ENCODE measurements at regions of chr19 and their contacts with region 1.

Region 1: GRCh38 chr19:15280915-15281683 is 48.9 kb upstream of the EPHX3 start:
- DNase-seq: peak; percentile 91

Region 2: DNA sequence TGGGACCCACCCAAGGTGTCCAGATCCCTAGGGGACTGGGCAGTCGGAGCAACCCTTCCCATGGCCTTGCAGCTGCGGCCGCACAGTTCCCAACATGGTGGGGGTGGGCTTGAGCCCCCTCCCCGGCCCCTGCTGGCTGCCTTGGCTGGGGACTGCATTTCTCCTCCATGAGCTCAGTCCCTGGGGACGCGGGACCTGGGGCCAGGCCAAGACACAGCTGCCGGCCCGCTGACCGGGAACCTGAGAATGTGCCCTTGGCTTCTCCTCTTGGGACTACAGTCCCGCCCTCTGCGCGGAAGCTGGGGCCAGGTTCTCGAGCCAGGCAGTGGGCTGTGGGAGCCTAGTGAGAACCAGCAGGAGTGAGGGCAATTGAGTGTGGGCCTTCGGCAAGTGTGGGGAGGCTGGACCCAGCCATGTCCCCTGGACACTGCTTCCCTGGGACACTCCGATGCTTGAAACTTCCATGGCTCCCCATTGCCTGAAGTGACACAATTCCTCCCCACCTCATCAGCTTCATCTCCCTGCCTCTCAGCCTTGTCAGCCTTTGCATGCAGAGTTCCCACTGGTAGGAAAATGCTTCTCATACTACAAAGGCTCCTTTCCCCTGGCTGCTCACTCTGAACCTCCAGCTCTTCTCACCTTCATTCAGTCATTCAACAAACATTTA is 67.3 kb before region 1 on chr19:
- in situ Hi-C with region 1: no loop called
- DNase-seq: no peak

Region 3: DNA sequence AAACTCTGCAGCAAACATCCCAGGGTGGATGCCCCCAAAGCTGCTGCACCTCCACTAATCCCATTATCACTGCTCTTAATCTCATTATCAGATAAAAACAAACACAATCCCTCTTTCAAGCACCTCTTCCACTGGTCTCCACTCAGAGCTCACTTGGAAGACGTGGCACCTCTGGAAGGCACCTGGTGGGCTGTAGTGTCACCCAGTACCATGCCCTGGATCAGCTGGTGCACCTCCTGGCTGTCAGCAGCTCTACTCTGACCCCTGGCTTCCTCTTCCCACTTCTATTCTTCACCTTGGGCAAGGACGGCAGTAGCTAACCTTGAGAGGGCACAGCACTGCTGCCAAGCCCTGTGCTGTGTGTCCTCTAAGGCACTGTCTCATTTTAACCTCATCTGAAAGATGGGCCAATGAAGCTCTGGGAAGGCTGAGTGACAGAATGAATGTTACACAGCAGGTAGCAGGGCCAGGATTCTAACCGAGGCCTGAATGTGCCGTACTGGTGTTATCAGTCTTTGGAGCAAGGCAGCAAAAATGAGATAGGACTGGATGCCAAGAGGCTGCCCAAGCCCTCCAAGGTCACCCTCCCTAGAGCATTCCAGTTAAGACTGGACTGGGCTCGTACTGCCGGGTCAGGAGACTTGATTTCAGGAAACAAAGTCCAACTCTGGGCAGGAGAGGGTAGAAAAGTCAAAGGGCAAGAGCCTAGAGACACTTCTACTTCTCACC is 43.9 kb after region 1 on chr19:
- in situ Hi-C with region 1: loop called (anchors 5 kb)
- DNase-seq: no peak

Region 4: DNA sequence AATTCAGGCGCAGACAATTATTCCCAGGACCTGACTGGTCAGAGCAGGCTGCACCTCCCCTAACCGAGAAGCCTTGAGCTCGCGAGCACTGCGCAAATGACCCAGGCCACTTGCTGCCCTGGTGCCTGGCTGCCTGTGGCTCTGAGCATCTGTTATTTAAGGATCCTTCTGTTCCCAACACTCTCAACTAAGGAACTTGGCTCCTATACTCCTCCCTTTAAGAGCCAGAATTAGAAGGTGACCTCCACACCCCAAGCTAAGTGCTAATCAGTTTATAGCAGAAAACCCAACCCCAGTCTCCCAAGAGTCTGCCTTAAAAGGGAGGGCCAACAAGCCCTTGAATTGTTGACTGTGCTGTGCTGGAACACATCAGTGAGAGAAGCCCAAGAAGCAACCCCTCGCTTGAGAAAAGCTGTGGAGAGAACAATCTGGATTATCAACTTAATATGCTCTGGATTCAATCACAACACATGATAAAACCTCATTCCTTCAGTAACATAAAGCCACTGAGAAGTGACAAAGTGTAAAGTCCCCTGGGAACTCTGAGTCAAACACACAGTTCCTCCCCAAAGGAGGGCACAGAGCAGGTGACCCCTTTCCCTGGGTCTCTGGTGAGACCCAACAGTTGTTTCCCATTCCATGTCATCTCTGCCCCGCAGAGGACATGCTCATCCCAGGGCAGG is 123.1 kb after region 1 on chr19:
- in situ Hi-C with region 1: no loop called
- DNase-seq: peak; percentile 89

Region 5: GRCh38 chr19:15432629-15433518 is 151.8 kb after region 1 on chr19:
- in situ Hi-C with region 1: no loop called
- DNase-seq: peak; percentile 84

Measured in G401 (cell line).